Activated CD4-positive, alpha-beta T cell treated with anti-CD3 and anti-CD28 coated beads for 36 hours (primary cell): ENCODE measurements at regions of chr11 and their contacts with region 1.

Region 1: GRCh38 chr11:22875869-22876473 is 15.7 kb upstream of the CCDC179 start:
- DNase-seq: peak; percentile 78
- ATAC-seq: peak; percentile 81
- H3K4me3 Mint-ChIP-seq: no peak overlapping the region
- H3K27ac Mint-ChIP-seq: no peak overlapping the region
- H3K4me1 Mint-ChIP-seq: no peaks in the 10 kb centered on the region
- H3K27me3 Mint-ChIP-seq: no peaks in the 10 kb centered on the region

Region 2: GRCh38 chr11:23078289-23078971 is 202.5 kb after region 1 on chr11:
- CTCF ChIA-PET with region 1: no interaction called
- POLR2A ChIA-PET with region 1: no interaction called
- intact Hi-C with region 1: no loop called
- DNase-seq: no peak
- ATAC-seq: no peak
- H3K4me3 Mint-ChIP-seq: no peak overlapping the region
- H3K27ac Mint-ChIP-seq: no peak overlapping the region
- H3K4me1 Mint-ChIP-seq: no peaks in the 10 kb centered on the region
- H3K27me3 Mint-ChIP-seq: no peaks in the 10 kb centered on the region

Region 3: DNA sequence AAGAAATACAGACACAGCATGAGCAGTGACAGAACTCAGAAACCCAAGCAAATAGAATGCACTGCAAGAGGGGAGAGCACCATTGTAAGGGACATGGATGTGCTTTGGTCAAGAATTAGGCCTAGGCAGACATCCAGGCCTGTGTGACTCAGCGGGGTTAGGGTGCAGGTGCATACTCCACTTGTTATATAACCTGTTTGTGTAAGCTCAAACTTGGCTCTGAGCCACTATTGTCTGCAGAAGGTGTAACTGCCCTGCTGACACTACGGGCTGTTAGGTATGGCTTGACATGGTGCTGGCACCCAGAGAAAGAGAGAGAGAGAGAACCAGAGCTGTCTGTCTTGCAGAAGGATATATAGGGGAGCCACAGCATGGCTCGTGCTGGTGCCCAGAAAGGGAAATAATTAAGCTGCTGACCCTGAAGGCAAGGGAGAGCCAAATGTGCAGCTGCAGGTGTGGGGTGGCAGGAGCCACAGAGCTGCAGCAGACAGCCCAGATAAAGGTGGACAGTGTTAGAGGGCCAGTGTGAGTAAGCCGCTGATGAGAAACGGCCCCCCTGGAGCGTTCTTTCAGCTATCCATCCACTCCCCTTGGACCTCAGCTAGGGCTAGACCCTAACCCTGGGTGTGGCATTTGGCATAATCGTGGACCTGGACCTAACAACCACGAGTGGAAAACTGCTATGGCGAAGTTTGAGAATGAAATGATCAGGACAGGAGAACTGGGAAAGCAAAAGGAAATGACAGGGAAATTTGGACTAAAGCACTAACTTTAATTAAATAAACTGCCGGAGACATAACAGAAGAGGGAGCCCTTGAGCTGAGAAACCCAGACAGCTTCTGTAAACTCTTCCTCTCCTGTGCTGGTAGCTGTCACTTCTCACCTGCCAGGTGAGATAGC is 237.3 kb after region 1 on chr11:
- CTCF ChIA-PET with region 1: interaction called, 3 read pairs
- POLR2A ChIA-PET with region 1: no interaction called
- intact Hi-C with region 1: loop called in 1 of 2 experiments (anchors 10 kb)
- DNase-seq: peak; percentile 20
- ATAC-seq: no peak
- H3K4me3 Mint-ChIP-seq: no peak overlapping the region
- H3K27ac Mint-ChIP-seq: no peak overlapping the region
- H3K4me1 Mint-ChIP-seq: no peaks in the 10 kb centered on the region
- H3K27me3 Mint-ChIP-seq: no peaks in the 10 kb centered on the region

Region 4: DNA sequence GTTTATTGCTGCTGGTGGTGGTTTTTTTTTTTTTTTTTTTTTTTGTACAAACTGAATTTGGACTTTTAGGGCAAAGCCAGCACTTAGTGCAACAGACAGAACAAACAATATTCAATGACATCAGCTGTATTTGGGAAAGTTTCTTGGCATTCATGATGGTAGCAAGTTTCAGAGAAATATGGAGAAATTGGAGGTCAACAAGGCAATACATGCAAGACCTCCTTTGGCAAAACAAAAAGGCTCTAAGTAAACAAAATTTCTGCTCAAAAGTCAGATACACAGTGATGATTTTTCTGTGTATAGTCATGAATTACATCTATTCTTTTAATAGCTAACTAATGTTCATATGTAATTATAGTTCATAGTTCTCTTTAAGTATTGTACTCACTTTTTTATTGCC is 1008.4 kb after region 1 on chr11:
- CTCF ChIA-PET with region 1: no interaction called
- POLR2A ChIA-PET with region 1: no interaction called
- intact Hi-C with region 1: no loop called
- DNase-seq: no peak
- ATAC-seq: no peak
- H3K4me3 Mint-ChIP-seq: no peak overlapping the region
- H3K27ac Mint-ChIP-seq: no peak overlapping the region
- H3K4me1 Mint-ChIP-seq: no peaks in the 10 kb centered on the region
- H3K27me3 Mint-ChIP-seq: no peaks in the 10 kb centered on the region